BJ (cell line): ENCODE measurements at regions of chr10 and their contacts with region 1.

Region 1: DNA sequence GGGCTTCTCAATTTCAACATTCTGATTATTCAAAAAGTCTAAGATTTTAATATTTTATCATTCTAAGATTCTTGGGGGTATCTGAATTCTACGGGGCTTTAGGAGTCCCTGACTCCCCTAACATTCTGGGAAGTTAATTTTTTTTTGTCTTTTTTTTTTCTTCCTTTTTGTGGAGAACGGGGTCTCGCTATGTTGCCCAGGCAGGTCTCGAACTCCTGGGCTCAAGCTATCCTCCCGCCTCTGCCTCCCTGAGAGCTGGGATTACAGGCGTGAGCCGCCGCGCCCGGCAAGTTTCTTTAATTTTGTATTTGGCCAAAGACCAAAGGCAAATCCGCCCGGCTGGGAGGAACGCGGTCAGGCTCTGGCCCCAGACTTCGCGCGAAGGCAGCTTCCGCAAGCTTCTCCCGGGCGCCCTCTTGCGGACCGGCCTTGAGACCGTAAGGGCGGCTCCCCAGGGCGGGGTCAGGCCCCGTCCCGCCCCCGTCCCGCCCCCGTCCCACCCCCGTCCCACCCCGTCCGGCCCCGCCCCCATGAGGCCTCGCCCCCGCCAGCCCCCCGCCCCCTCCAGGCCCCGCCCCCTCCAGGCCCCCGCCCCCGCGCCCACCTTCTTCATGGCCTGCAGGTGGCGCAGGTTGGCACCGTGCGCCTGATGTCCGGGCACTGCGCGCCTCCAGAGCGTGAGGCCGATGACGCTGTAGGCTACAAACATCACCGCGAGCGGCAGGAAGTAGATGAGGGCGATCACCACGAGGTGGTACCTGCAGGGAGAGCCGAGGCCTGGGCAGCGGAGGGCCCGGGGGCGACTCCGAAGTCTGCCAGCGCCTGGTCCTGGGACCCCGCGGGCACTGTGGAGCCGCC is 8.2 kb downstream of the TACR2 start:
- DNase-seq: peak; percentile 60
- H3K4me3 ChIP-seq: peak overlapping the region; percentile 42
- H3K27me3 ChIP-seq: no peaks in the 10 kb centered on the region
- CTCF ChIP-seq: peak; percentile 69

Region 2: GRCh38 chr10:69237528-69238159 is 170.9 kb before region 1 on chr10:
- CTCF ChIA-PET with region 1: interaction called, 24 read pairs
- POLR2A ChIA-PET with region 1: interaction called, 3 read pairs
- DNase-seq: no peak
- H3K4me3 ChIP-seq: no peak overlapping the region
- H3K27me3 ChIP-seq: no peaks in the 10 kb centered on the region
- CTCF ChIP-seq: peak; percentile 94

Region 3: DNA sequence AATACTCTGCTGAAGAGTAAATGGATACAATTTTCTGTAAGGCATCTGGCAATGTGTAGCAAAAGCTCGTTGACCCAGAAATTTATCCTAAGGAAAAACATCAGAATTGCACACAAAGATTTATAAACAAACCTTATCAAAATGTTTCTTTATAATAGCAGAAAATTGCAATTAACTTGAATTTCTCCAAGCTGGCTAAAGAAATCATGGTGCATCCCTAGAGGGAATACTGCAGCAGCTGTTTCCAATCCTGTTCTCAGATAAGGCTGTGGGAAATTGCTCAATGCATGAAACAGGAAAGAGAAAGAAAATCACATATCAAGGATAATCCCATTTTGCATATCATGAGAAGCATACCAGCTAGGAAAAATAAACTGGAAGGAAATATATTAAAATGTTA is 10.6 kb before region 1 on chr10:
- CTCF ChIA-PET with region 1: interaction called, 20 read pairs
- POLR2A ChIA-PET with region 1: interaction called, 4 read pairs
- DNase-seq: no peak
- H3K4me3 ChIP-seq: no peak overlapping the region
- H3K27me3 ChIP-seq: no peaks in the 10 kb centered on the region
- CTCF ChIP-seq: no peak